Heart left ventricle (tissue), 16 donors: ENCODE measurements at regions of chr15 and their contacts with region 1.

Region 1: GRCh38 chr15:31031471-31032067 is 40.1 kb upstream of the MTMR10 start:
- DNase-seq: no peak
- ATAC-seq: peak in 2 of 4 donors; percentile 38 to 90
- H3K4me3 ChIP-seq: no peak overlapping the region
- H3K27ac ChIP-seq: peak overlapping the region in 4 of 12 donors; percentile 24 to 60 (median 38)
- H3K4me1 ChIP-seq: peaks cover 0 to 26% (median 4%) of the 10 kb centered on the region in 12 donors
- H3K27me3 ChIP-seq: no peaks in the 10 kb centered on the region
- CTCF ChIP-seq: no peak
- POLR2A ChIP-seq: no peak

Region 2: GRCh38 chr15:30680496-30680895 is 351.1 kb before region 1 on chr15:
- intact Hi-C with region 1: no loop called
- DNase-seq: no peak
- ATAC-seq: no peak
- H3K4me3 ChIP-seq: no peak overlapping the region
- H3K27ac ChIP-seq: no peak overlapping the region
- H3K4me1 ChIP-seq: no peaks in the 10 kb centered on the region
- H3K27me3 ChIP-seq: no peaks in the 10 kb centered on the region
- CTCF ChIP-seq: no peak
- POLR2A ChIP-seq: no peak

Region 3: DNA sequence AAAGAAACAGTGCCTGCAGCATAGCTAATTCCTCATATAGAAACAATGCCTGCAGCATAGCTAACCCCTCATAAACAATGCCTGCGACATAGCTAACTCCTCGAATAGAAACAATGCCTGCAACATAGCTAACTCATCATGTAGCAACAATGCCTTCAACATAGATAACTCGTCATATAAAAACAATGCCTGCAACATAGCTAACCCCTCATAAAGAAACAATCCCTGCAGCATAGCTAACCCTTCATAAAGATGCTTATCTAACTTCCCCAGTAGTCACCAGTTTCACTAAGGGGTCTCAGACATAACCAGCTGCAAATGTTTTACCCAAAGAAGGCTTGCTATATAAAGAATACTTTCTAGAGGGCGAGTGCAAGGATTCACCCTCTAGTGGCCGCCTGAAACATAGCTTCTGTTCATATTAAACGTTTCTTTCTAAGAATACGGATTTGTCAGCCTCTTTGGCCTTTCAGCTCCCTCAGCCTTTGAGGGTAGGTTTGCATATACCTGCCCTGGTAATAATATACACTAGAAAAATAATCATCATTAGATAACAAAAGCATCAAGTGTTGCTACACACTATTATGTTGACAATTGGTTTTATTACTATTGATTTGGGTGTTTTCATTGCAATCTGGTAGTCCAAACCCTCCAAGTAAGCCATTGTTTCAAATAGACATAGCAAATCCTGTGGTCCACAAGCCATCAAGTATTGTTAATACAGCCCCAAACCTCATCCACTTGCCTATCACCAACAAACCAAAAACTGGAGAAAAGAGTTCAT is 172.3 kb before region 1 on chr15:
- intact Hi-C with region 1: no loop called
- DNase-seq: no peak
- ATAC-seq: no peak
- H3K4me3 ChIP-seq: no peak overlapping the region
- H3K27ac ChIP-seq: no peak overlapping the region
- H3K4me1 ChIP-seq: no peaks in the 10 kb centered on the region
- H3K27me3 ChIP-seq: no peaks in the 10 kb centered on the region
- CTCF ChIP-seq: peak; percentile 33 to 64 (median 52)
- POLR2A ChIP-seq: no peak

Region 4: DNA sequence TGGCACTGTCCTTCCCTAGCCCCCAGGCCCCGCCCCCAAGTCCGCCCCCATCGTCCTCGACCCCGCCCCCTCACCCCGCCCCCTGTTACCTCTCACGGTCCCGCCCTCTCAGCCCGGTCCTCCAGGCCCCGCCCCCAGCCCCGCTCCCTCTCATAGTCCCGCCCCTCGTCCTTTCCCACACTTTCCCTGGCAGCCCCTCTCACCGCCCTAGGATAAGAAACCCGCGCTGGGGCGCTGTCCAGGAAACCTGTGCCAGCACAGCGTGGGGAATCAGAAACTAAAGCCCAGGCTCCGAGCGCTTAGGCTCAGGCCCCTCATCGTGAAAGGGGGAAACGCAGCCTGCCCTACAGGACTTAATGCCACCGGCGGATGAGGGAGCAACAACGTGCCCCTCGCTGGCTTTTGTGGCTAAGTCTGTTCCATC is 49.0 kb after region 1 on chr15:
- intact Hi-C with region 1: no loop called
- DNase-seq: peak; percentile 27 to 84 (median 39)
- ATAC-seq: peak in 3 of 4 donors; percentile 67 to 81 (median 75)
- H3K4me3 ChIP-seq: peak overlapping the region in 8 of 12 donors; percentile 23 to 48 (median 33)
- H3K27ac ChIP-seq: no peak overlapping the region
- H3K4me1 ChIP-seq: peaks cover 0 to 16% (median 0%) of the 10 kb centered on the region in 12 donors
- H3K27me3 ChIP-seq: peaks cover 0 to 7% (median 0%) of the 10 kb centered on the region in 9 donors
- CTCF ChIP-seq: no peak
- POLR2A ChIP-seq: no peak

Region 5: GRCh38 chr15:31096563-31096962 is 65.0 kb after region 1 on chr15:
- intact Hi-C with region 1: loop called in 1 of 10 experiments (anchors 2 kb)
- DNase-seq: no peak
- ATAC-seq: peak in 1 of 4 donors; percentile 18
- H3K4me3 ChIP-seq: no peak overlapping the region
- H3K27ac ChIP-seq: no peak overlapping the region
- H3K4me1 ChIP-seq: peaks cover 0 to 7% (median 0%) of the 10 kb centered on the region in 12 donors
- H3K27me3 ChIP-seq: peaks cover 0 to 3% (median 0%) of the 10 kb centered on the region in 9 donors
- CTCF ChIP-seq: no peak
- POLR2A ChIP-seq: no peak

Region 6: DNA sequence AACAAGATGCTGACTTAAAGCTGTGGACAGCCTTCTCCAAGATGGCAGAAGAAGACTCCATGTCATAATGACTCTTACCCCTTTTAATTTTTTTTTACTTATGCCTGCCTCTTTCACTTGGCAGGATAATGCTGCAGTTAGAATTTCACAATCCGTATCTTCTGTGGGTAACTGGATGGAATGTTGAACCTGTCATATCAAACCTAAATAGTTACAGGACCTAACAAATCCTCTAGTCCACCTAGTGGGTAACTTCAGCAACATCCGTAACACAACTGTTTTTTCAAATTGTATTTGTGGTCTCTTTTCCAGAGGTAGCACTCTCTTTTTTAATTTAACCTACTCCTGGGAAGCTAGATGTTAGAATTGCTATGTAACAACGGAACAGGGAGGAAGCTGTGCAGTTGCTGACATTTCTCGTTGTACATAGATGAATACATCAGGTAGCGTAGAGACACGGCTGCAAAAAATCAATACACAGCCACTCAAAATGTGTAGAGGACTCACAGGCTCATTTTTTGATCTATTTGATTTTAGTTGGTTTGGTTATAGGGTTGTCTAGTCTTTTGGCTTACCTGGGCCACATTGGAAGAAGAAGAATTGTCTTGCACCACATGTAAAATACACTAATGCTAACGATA is 113.8 kb after region 1 on chr15:
- intact Hi-C with region 1: no loop called
- DNase-seq: no peak
- ATAC-seq: no peak
- H3K4me3 ChIP-seq: no peak overlapping the region
- H3K27ac ChIP-seq: no peak overlapping the region
- H3K4me1 ChIP-seq: no peaks in the 10 kb centered on the region
- H3K27me3 ChIP-seq: no peaks in the 10 kb centered on the region
- CTCF ChIP-seq: no peak
- POLR2A ChIP-seq: no peak